HEK293 (cell line): ENCODE measurements at regions of chr16 and their contacts with region 1.

Region 1: DNA sequence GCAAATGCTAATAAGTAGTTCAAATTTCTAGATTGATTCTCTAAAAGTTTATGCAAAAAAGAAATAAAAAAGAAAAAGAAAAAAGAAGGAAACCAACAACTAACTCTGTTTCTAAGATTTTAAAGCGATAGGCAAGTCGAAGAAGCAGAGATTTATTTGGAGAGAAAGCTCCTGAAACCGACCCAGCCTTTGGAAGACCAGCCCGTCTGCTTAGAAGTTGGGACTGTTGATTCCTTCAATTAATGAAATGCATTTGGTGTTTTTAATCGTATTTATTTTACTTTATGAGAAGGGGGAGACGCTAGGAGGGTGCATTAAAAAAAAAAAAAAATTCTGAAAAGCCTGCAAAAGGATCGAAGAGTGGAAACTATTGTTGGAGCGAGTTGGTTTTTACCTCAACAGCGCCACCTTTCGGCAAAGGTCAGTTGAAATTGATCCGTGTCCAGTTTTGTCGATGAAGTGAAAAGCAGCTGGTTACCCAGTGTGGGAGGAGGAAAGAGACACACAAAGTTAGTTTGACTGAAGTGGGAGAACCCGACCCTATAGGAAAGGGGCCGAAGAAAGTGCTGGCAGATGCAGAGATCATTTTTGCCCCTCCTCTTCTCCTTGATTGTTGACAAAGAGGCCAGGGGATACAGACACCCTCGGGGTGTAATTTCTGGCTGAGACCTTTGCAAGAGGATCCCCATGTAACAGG is 1.5 kb upstream of the MAF start:
- H3K4me3 ChIP-seq: peak overlapping the region; percentile 61
- H3K27ac ChIP-seq: peak overlapping the region; percentile 98
- H3K4me1 ChIP-seq: peaks cover 14% of the 10 kb centered on the region
- CTCF ChIP-seq: peak; percentile 62; the same call in 1 of the 2 replicates

Region 2: GRCh38 chr16:78094176-78094575 is 1507.9 kb before region 1 on chr16:
- CTCF ChIA-PET with region 1: interaction called, 10 read pairs
- POLR2A ChIA-PET with region 1: no interaction called
- H3K4me3 ChIP-seq: no peak overlapping the region
- H3K27ac ChIP-seq: no peak overlapping the region
- H3K4me1 ChIP-seq: 0 out of 2 replicates have a peak, but pooled peaks cover 2% of the 10 kb centered on the region
- CTCF ChIP-seq: peak; percentile 32; the same call in 1 of the 2 replicates

Region 3: DNA sequence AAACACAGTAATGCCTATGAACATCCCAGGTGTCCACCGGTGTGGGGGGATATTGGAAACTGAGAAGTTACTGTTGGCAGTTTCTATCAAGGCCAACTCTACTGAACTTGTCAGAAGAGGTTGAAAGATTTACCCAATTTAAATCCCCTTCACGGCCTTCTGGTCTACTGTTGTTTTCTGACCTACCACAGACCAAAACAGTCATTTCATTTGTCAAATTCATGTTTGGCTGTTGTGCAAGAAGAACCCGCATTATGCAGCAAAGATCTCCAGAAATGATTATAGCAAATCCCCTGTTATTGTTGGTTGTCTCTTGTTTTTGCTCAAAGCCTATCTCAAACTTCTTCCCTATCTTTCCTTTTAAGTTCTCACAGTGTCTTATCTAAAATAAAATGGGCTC is 71.6 kb after region 1 on chr16:
- CTCF ChIA-PET with region 1: no interaction called
- POLR2A ChIA-PET with region 1: no interaction called
- H3K4me3 ChIP-seq: no peak overlapping the region
- H3K27ac ChIP-seq: no peak overlapping the region
- H3K4me1 ChIP-seq: no peaks in the 10 kb centered on the region
- CTCF ChIP-seq: no peak

Region 4: GRCh38 chr16:80006241-80007215 is 404.4 kb after region 1 on chr16:
- CTCF ChIA-PET with region 1: interaction called, 12 read pairs
- POLR2A ChIA-PET with region 1: no interaction called
- H3K4me3 ChIP-seq: no peak overlapping the region
- H3K27ac ChIP-seq: no peak overlapping the region
- H3K4me1 ChIP-seq: peaks cover 7% of the 10 kb centered on the region; the same call in 1 of the 2 replicates
- CTCF ChIP-seq: no peak